PC-3 (cell line): ENCODE measurements at regions of chr11 and their contacts with region 1.

Region 1: GRCh38 chr11:45102810-45103621 is 43.4 kb upstream of the PRDM11 start:
- DNase-seq: peak; percentile 84
- ATAC-seq: peak; percentile 95
- H3K4me3 ChIP-seq: peak overlapping the region; percentile 49
- H3K27ac ChIP-seq: no peak overlapping the region
- H3K4me1 ChIP-seq: peaks cover 6% of the 10 kb centered on the region
- H3K27me3 ChIP-seq: peaks cover 12% of the 10 kb centered on the region; the same call in 1 of the 2 replicates
- CTCF ChIP-seq: peak; percentile 98

Region 2: GRCh38 chr11:44927174-44927661 is 175.8 kb before region 1 on chr11:
- CTCF ChIA-PET with region 1: interaction called, 24 read pairs
- POLR2A ChIA-PET with region 1: no interaction called
- intact Hi-C with region 1: loop called (anchors 1 kb)
- DNase-seq: peak; percentile 79
- ATAC-seq: peak; percentile 89
- H3K4me3 ChIP-seq: no peak overlapping the region
- H3K27ac ChIP-seq: no peak overlapping the region
- H3K4me1 ChIP-seq: no peaks in the 10 kb centered on the region
- H3K27me3 ChIP-seq: no peaks in the 10 kb centered on the region
- CTCF ChIP-seq: peak; percentile 89

Region 3: DNA sequence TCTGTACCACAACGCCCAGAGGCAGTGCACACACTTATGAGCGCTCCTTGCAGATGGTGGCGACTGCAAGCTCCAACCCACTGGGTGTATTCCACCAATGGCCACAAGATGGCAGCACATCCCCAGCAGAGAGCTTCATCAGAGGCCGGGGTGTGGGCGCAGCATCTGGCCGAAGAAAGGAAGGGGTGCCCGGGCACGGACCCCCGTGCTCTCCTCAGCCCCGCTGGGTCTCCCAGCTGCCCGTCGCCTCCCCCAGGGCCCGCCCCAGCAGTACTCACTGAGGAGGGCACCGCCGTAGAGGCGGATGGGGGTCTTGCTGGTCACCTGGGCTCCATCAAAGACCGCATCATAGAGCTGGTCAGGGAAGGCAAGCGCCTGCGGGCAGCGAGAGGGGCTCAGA is 166.5 kb before region 1 on chr11:
- CTCF ChIA-PET with region 1: interaction called, 58 read pairs
- POLR2A ChIA-PET with region 1: no interaction called
- intact Hi-C with region 1: loop called (anchors 1 kb)
- DNase-seq: peak; percentile 84
- ATAC-seq: peak; percentile 89
- H3K4me3 ChIP-seq: no peak overlapping the region
- H3K27ac ChIP-seq: no peak overlapping the region
- H3K4me1 ChIP-seq: no peaks in the 10 kb centered on the region
- H3K27me3 ChIP-seq: no peaks in the 10 kb centered on the region
- CTCF ChIP-seq: peak; percentile 88

Region 4: GRCh38 chr11:44955015-44955738 is 147.8 kb before region 1 on chr11:
- CTCF ChIA-PET with region 1: no interaction called
- POLR2A ChIA-PET with region 1: no interaction called
- intact Hi-C with region 1: no loop called
- DNase-seq: peak; percentile 46
- ATAC-seq: peak; percentile 47
- H3K4me3 ChIP-seq: no peak overlapping the region
- H3K27ac ChIP-seq: no peak overlapping the region
- H3K4me1 ChIP-seq: peaks cover 12% of the 10 kb centered on the region
- H3K27me3 ChIP-seq: no peaks in the 10 kb centered on the region
- CTCF ChIP-seq: no peak

Region 5: DNA sequence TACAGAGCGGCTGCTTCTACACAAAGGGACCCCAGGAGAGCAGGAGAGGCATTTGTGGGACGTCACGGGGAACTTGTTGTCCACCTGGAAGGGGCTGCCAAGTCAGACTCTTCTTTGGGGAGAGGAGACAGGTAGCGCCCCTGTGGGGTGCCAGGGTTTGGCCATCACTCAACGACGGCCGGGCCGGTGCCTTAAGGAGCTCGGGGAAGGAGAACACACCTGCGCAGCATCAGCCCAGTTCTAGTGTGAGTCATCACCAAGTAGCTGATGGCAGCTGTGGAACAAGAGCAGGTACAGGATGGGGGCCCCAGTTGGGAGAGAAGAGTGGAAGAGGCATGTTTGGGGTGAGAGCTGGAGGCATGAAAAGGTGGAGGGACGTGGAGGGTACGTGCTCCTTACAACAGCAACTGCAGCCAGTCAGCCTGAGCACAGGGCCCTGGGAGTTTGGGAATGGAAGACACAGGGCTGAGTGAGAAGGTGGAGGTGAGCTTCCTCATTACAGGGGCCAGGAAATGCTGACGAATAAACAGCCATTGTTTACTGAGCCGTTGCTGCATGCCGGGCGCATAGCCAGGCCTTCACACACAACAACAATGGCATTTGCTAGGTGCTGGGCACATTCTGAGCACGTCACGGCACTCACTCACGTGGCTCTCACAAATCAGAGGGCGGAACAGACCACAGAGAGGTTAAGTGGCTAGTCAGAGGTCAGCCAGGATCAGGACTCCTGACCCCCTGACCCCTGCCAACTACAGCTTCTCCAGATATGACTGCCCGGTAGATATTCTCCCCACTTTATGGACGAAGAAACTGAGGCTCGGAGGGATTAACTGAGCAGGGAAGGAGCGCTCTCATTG is 123.2 kb before region 1 on chr11:
- CTCF ChIA-PET with region 1: interaction called, 5 read pairs
- POLR2A ChIA-PET with region 1: no interaction called
- intact Hi-C with region 1: loop called (anchors 1 kb)
- DNase-seq: peak; percentile 92
- ATAC-seq: peak; percentile 63
- H3K4me3 ChIP-seq: peak overlapping the region; percentile 54
- H3K27ac ChIP-seq: peak overlapping the region; percentile 99
- H3K4me1 ChIP-seq: peaks cover 37% of the 10 kb centered on the region
- H3K27me3 ChIP-seq: no peaks in the 10 kb centered on the region
- CTCF ChIP-seq: no peak

Region 6: DNA sequence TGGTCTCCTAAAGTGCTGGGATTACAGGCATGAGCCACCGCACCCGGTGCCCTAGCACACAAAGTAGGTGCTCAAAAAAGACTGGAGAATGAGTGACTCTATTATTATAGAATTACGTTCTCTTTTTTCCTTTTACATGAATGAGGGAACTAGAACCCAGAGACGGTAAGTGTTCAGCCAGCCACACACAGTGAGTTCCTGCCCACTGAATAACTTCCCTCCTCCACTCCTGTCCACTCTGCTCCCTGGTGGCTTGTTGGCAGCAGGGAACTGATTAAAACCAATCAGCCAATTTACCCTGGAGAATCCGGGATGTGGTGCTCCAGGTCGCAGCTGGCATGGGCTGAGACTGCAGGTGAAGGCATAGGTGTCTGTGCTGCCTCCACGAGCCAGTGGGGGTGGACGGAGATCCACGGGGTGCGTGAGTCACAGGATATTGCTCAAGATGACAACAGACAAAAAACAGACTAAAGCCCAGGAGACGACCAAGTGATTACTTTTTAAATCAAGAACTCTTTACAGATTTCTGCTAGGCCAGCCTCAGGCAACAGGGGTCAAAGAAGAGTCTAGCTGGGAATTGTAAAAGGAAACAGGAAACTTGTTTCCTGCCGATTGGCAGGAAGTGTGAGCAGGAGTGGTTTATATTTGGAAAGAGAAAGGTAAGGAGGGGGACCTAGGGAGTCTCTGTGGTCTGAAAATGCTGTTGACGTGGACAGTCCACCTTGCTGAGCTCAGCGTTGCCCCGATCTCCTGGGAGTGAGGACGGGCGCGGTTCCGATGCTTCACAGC is 57.1 kb before region 1 on chr11:
- CTCF ChIA-PET with region 1: no interaction called
- POLR2A ChIA-PET with region 1: no interaction called
- intact Hi-C with region 1: loop called (anchors 5 kb)
- DNase-seq: peak; percentile 83
- ATAC-seq: peak; percentile 79
- H3K4me3 ChIP-seq: peak overlapping the region; percentile 54
- H3K27ac ChIP-seq: peak overlapping the region; percentile 83
- H3K4me1 ChIP-seq: peaks cover 41% of the 10 kb centered on the region
- H3K27me3 ChIP-seq: no peaks in the 10 kb centered on the region
- CTCF ChIP-seq: no peak

Region 7: DNA sequence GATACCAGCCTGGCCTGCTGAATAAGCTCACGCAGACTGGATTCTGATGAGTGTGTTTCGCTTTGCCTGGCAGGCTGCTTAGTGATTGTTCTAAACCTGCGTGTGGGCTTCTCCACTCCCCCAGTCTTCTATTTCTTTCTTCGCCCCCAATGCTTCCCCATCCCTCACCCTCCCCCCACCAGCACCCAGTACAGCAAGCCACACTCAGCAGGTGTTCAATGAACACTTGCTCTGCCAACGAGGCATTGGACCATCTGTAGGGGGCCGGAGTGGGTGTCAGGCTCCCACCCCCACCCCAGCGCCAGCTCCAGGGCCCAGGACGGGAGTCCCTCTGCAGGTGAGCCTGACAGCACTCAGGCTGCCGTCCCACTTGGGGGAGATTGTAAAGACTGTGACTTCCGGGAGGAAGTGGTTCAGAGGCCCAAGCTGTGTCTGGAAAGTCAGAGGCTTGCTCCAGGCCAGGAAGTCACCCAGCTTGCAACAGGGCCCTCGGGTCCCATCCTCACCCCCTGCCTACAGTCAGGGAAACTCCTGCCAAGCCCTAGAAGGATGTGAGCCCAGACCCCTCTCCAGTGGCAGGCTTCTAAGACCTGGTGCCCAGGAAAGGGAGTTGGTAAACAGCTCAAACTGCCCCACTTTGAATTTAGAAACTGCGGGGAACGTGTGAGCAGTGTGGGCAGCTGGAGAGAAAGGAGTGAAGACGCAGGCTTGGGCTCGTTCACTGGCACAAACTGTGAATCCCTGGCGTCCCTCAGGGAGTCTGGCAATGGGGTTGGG is 22.9 kb before region 1 on chr11:
- CTCF ChIA-PET with region 1: no interaction called
- POLR2A ChIA-PET with region 1: no interaction called
- intact Hi-C with region 1: no loop called
- DNase-seq: no peak
- ATAC-seq: no peak
- H3K4me3 ChIP-seq: no peak overlapping the region
- H3K27ac ChIP-seq: no peak overlapping the region
- H3K4me1 ChIP-seq: no peaks in the 10 kb centered on the region
- H3K27me3 ChIP-seq: no peaks in the 10 kb centered on the region
- CTCF ChIP-seq: no peak